GM12878 (cell line): ENCODE measurements at regions of chr11 and their contacts with region 1.

Region 1: DNA sequence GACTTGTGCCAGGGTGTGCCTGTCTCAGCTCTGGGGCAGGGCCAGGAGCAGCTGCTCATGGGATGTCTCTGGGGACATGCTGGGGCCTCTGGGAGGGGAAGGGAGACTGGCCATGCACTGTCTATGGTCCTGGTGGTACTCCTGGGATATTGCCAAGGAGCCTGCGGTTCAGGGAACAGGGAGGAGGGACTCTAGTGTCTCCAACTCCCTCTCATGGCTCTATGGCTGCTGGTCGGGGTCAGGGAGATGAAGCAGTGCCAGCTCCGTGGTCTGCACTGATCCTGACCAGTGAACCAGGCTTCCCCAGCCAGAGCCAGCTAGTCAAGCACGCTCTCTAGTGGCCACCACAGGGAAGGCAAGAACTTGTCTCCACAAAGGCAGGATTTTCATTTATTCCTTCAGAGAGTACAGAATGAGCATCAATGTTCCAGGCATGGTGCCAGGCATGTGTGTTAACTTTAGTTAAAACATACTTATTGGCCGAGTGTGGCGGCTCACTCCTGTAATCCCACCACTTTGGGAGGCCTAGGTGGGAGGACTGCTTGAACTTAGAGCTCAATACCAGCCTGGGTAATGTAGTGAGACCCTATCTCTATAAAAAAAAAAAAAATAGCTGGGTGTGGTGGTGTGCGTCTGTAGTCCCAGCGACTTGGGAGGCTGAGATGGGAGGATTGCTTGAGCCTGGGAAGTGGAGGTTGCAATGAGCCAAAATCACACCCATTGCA is 2.5 kb upstream of the BEST1 start:
- DNase-seq: no peak
- ATAC-seq: peak; percentile 93
- H3K4me3 ChIP-seq: no peak overlapping the region
- H3K27ac ChIP-seq: no peak overlapping the region
- H3K4me1 ChIP-seq: no peaks in the 10 kb centered on the region
- H3K27me3 ChIP-seq: no peaks in the 10 kb centered on the region; a peak in 1 of 4 replicates
- CTCF ChIP-seq: peak; percentile 94 to 98 (median 96)
- EP300 ChIP-seq: no peak
- POLR2A ChIP-seq: no peak
- RAD21 ChIP-seq: peak; percentile 94

Region 2: DNA sequence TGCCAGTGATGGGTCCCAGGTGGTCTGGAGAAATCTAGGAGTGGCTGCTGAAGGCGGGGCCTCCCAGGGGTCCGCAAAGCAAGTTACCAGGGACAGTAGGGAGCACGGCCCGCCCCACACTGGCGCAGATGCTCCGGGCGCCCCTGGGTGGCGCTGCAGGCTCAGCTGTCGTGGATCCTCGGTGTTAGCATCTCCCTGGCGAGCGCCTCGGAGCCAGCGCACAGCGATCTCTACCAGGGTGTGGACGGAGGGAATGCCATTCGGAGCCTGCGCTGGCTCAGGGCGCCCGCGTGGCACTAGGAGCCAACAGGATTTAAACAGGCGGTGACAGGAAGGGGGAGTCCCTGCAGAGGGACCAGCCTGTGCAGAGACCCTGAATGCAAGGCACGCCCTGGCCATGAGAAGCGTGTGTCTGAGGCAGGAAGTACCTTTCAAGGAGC is 76.5 kb before region 1 on chr11:
- CTCF ChIA-PET with region 1: interaction called, 19 read pairs
- POLR2A ChIA-PET with region 1: no interaction called
- RAD21 ChIA-PET with region 1: interaction called, 8 read pairs
- SMC1A ChIA-PET with region 1: interaction called, 10 read pairs
- in situ Hi-C with region 1: no loop called
- intact Hi-C with region 1: loop called (anchors 2 kb)
- DNase-seq: no peak
- ATAC-seq: peak; percentile 93
- H3K4me3 ChIP-seq: no peak overlapping the region
- H3K27ac ChIP-seq: no peak overlapping the region
- H3K4me1 ChIP-seq: no peaks in the 10 kb centered on the region
- H3K27me3 ChIP-seq: no peaks in the 10 kb centered on the region; a peak in 1 of 4 replicates
- CTCF ChIP-seq: peak; percentile 85 to 94 (median 91)
- EP300 ChIP-seq: no peak
- POLR2A ChIP-seq: no peak
- RAD21 ChIP-seq: peak; percentile 82

Region 3: DNA sequence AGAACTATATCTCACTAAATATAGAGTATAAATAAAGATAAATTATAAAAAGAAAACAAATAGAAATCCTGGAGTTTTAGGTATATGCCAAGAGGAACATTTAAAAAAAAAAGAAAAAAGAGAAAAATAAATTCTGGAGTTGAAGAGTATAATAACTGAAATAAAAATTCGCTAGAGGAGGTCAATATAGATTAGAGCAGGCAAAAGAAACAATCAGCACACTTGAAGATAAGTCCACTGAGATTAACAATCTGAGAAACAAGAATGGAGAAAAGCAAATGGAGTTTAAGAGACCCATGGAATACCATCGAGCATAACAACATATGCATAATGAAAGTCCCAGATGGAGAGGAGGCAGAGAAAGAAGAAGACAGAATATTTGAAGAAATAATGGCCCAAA is 11.8 kb before region 1 on chr11:
- CTCF ChIA-PET with region 1: interaction called, 19 read pairs
- POLR2A ChIA-PET with region 1: no interaction called
- RAD21 ChIA-PET with region 1: interaction called, 5 read pairs
- SMC1A ChIA-PET with region 1: interaction called, 9 read pairs
- in situ Hi-C with region 1: no loop called
- intact Hi-C with region 1: no loop called
- DNase-seq: no peak
- ATAC-seq: no peak
- H3K4me3 ChIP-seq: no peak overlapping the region
- H3K27ac ChIP-seq: no peak overlapping the region
- H3K4me1 ChIP-seq: no peaks in the 10 kb centered on the region
- H3K27me3 ChIP-seq: no peaks in the 10 kb centered on the region; a peak in 2 of 4 replicates
- CTCF ChIP-seq: no peak
- EP300 ChIP-seq: no peak
- POLR2A ChIP-seq: no peak
- RAD21 ChIP-seq: no peak

Region 4: DNA sequence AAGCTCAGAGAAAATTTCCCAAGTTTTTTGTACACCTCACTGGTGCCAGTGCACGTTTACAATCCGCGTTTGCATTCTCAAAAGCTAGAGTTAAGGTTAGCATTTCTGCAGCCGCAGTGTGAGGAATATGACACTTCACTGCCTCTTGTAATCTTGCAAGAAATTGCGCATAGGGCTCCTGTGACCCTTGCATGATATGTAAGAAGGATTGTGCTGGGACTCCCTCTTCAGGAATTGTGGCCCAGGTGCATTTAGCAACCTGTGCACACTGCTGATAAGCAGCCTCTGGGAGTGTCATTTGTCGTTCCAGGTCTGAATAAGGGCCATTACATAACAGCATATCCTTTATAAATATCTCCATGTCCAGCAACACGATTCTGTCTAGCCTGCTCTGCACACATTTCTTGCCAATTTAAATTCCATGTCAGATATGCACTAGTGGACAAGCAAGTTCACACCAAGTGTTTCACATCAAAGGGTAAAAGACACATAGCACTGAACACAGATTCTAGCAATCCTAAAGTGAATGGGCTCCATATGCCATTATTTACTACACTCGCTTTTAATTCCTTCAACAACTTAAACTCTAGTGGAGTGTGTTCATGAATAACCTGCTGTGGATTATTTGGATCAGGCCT is 107.0 kb after region 1 on chr11:
- CTCF ChIA-PET with region 1: interaction called, 4 read pairs
- POLR2A ChIA-PET with region 1: no interaction called
- RAD21 ChIA-PET with region 1: interaction called, 4 read pairs
- SMC1A ChIA-PET with region 1: interaction called, 3 read pairs
- in situ Hi-C with region 1: no loop called
- intact Hi-C with region 1: loop called (anchors 2 kb)
- DNase-seq: no peak
- ATAC-seq: peak; percentile 51; the same call in 1 of the 3 replicates
- H3K4me3 ChIP-seq: no peak overlapping the region
- H3K27ac ChIP-seq: no peak overlapping the region
- H3K4me1 ChIP-seq: no peaks in the 10 kb centered on the region
- H3K27me3 ChIP-seq: no peaks in the 10 kb centered on the region
- CTCF ChIP-seq: peak; percentile 48 to 69 (median 49); a peak in 5 of 6 replicates
- EP300 ChIP-seq: no peak
- POLR2A ChIP-seq: no peak
- RAD21 ChIP-seq: peak; percentile 56

Region 5: GRCh38 chr11:62108017-62108750 is 160.5 kb after region 1 on chr11:
- CTCF ChIA-PET with region 1: interaction called, 37 read pairs
- POLR2A ChIA-PET with region 1: interaction called, 3 read pairs
- RAD21 ChIA-PET with region 1: interaction called, 14 read pairs
- SMC1A ChIA-PET with region 1: interaction called, 18 read pairs
- in situ Hi-C with region 1: no loop called
- intact Hi-C with region 1: no loop called
- DNase-seq: peak; percentile 11
- ATAC-seq: peak; percentile 79
- H3K4me3 ChIP-seq: no peak overlapping the region
- H3K27ac ChIP-seq: no peak overlapping the region
- H3K4me1 ChIP-seq: no peaks in the 10 kb centered on the region
- H3K27me3 ChIP-seq: no peaks in the 10 kb centered on the region
- CTCF ChIP-seq: peak; percentile 59 to 82 (median 80)
- EP300 ChIP-seq: no peak
- POLR2A ChIP-seq: no peak
- RAD21 ChIP-seq: peak; percentile 91